CD4-positive, alpha-beta memory T cell (primary cell): ENCODE measurements at regions of chr13 and their contacts with region 1.

Region 1: DNA sequence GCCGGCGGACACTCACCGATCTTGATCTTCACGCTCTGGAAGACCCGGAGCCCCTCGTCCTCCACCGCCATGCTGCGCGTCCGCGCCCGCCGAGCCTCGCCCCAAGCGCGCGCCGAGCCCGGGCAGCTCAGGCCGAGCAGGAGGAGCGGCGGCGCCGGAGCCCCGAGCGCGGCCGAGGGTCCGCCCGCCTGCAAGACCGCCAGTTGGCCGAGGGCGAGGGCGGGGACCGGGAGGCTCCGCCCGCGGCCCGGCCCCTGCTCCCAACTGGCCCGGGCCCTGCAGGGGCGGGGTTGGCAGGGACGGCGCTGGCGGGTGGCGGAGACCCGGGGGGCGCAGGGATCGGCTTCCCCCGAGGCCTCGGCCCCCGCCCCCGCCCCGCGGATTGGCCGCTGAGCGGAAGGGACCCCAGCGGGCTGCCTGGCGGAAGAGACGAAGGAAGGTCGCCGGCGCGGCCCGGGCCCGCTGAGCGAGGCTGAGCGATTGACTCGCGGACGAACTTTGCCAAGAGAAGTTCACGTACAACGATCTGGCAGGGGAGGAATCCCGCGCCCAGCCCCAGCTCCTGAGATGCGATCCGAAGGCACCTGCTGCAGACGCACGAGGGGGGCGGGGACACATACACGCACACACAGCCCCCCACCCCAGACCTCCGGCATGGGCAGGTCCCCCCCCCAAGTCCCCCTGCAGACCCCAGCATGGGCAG is at the start of gene RASA3:
- DNase-seq: peak; percentile 59 to 72 (median 62)
- H3K4me3 ChIP-seq: peak within 1 kb of the TSS; percentile 92 to 93
- H3K4me3 Mint-ChIP-seq: peak within 1 kb of the TSS; percentile 79 to 100 (median 100)
- H3K27ac ChIP-seq: peak within 1 kb of the TSS; percentile 74
- H3K27ac Mint-ChIP-seq: peak within 1 kb of the TSS; percentile 87 to 100 (median 98)
- H3K4me1 ChIP-seq: peaks cover 45% of the 10 kb centered on the region
- H3K4me1 Mint-ChIP-seq: peaks cover 31 to 69% (median 57%) of the 10 kb centered on the region in 4 donors
- H3K27me3 ChIP-seq: no peaks in the 10 kb centered on the region
- H3K27me3 Mint-ChIP-seq: no peaks in the 10 kb centered on the region
- total RNA-seq, gene RASA3: 171 to 174 TPM

Region 2: DNA sequence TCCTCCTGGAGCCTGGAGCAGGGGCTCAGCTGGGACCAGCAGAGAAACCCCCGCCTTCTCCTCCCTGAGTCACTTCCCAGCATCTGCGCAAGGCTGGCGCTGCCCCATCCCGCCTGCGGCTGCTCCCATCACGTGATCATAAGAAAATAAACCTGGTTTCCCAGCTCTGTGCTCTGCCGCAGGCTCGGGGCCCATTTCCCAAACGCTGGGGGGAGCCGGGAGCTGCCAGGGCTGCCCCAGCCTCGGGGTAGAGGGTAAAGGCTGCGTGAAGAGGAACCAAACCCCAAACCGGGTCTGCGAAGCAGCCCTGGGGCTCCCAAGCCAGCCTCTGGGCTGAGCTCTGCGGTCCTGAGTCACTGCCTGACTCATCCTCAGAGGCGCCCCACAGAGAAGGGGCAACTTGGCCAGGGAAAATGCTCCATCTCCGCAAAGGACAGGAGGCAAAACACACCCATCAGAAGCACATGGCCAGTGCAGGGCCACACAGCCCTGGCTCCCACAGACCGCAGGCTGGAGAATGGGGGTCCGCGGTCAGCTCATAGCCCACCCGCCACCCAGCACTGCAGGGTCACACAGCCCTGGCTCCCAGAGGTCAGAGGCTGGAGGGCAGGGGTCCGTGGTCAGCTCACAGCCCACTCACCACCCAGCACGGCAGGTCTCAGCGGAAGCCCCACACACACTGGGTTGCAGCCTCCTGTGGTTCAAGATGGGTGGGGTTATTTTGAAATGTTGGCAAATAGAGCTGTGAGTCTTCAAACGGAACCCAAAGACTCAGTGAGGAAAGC is 67.2 kb before region 1 on chr13:
- CTCF ChIA-PET with region 1: no interaction called
- POLR2A ChIA-PET with region 1: interaction called, 11 read pairs
- intact Hi-C with region 1: loop called (anchors 2 kb)
- DNase-seq: peak; percentile 55 to 88 (median 62)
- H3K4me3 ChIP-seq: peak overlapping the region; percentile 47 to 57
- H3K4me3 Mint-ChIP-seq: peak overlapping the region; percentile 77 to 93 (median 84)
- H3K27ac ChIP-seq: peak overlapping the region; percentile 37
- H3K27ac Mint-ChIP-seq: peak overlapping the region; percentile 89 to 96 (median 92)
- H3K4me1 ChIP-seq: peaks cover 60% of the 10 kb centered on the region
- H3K4me1 Mint-ChIP-seq: peaks cover 23 to 70% (median 51%) of the 10 kb centered on the region in 4 donors
- H3K27me3 ChIP-seq: no peaks in the 10 kb centered on the region
- H3K27me3 Mint-ChIP-seq: no peaks in the 10 kb centered on the region

Region 3: DNA sequence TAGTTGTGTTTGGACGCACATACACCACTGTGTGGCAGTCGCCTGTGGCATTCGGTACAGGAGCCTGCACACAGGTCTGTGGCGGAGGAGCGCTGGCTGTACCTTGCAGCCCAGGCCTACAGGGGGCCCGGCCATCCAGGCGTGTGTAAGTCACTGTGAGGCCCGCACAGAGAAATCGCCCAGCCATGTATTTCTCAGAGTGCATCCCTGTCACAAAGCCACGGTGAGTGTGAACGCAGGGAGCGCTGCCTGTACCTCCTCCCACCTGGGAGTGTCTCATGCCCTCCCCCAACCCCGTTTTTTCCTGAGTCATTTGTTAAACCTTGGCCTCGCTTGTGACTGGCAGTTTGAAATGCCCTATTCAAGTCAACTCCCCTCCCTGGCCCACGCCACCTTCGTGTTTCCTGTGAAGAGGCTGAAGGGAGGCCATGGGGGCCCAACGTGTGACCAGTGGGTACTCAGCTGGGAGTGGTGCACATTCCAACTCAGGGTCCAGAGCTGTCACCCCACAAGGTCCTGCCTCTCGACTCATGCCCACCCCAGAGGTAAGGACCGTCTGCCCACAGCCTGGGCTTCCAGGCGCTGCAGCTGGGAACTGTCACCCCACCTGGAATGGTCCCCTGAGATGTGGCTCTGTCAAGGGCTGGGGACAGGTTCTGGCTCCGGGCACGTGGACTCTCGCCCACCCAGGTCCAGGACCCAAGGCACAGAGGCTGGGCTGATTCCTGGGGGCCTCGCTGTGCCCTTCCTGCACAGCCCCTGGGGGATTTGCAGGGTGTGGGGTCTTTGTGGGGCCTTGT is 11.4 kb after region 1 on chr13:
- CTCF ChIA-PET with region 1: interaction called, 11 read pairs
- POLR2A ChIA-PET with region 1: interaction called, 170 read pairs
- intact Hi-C with region 1: loop called (anchors 1 kb)
- DNase-seq: peak in 3 of 5 donors; percentile 42 to 52 (median 51)
- H3K4me3 ChIP-seq: peak overlapping the region in 1 of 2 donors; percentile 43
- H3K4me3 Mint-ChIP-seq: peak overlapping the region in 2 of 8 donors; percentile 32 to 78
- H3K27ac ChIP-seq: peak overlapping the region; percentile 56
- H3K27ac Mint-ChIP-seq: peak overlapping the region in 5 of 7 donors; percentile 91 to 96 (median 94)
- H3K4me1 ChIP-seq: peaks cover 90% of the 10 kb centered on the region
- H3K4me1 Mint-ChIP-seq: peaks cover 38 to 48% (median 41%) of the 10 kb centered on the region in 4 donors
- H3K27me3 ChIP-seq: no peaks in the 10 kb centered on the region
- H3K27me3 Mint-ChIP-seq: no peaks in the 10 kb centered on the region

Region 4: DNA sequence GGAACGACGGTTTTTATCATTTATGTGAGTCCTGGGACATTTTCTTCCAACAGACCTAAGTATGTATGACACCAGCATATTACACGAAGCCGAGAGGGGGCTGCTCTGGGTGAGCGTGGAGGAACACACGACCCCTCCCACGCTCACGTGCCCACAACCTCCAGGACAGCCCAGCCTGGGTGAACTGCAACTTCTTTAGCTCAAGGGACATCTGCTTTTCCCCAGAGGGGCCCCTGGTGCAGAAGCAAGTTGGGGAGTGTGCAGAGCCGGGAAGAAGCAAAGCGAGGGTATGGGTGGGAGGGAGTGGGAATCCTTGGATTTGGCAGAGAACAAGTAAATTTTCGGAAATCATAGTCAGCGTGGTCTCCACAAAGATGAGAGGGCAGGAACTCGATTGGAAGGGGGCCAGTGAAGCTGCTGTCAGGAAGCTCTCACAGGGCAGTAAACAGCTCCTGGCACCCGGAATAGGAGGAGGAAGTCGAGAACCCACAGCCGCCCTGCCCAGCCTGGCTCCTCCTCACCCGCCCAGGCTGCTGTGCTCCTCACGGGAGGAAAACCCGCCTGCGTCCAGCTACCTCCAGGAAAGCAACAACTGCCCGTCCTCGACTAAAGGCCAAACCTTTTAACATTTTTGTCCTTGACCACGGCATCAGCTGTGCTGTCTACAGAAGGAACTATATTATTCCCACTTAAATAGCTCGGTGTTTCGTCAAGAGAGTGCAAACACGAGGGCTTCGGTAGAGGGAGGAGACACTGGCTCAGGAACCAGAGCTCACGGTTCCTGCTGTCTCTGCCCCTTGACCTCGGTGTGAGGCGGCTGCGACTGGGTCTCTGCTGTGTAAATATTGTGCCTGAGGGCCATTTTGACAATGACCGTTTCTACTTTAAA is 29.3 kb after region 1 on chr13:
- CTCF ChIA-PET with region 1: interaction called, 4 read pairs
- POLR2A ChIA-PET with region 1: interaction called, 45 read pairs
- intact Hi-C with region 1: loop called (anchors 5 kb)
- DNase-seq: peak in 3 of 5 donors; percentile 32 to 51 (median 39)
- H3K4me3 ChIP-seq: peak overlapping the region in 1 of 2 donors; percentile 13
- H3K4me3 Mint-ChIP-seq: peak overlapping the region; percentile 50 to 92 (median 86)
- H3K27ac ChIP-seq: peak overlapping the region; percentile 23
- H3K27ac Mint-ChIP-seq: peak overlapping the region; percentile 81 to 97 (median 93)
- H3K4me1 ChIP-seq: peaks cover 81% of the 10 kb centered on the region
- H3K4me1 Mint-ChIP-seq: peaks cover 52 to 95% (median 72%) of the 10 kb centered on the region in 4 donors
- H3K27me3 ChIP-seq: no peaks in the 10 kb centered on the region
- H3K27me3 Mint-ChIP-seq: no peaks in the 10 kb centered on the region